ENCODE measurements at regions of chr15 and their contacts with region 1.

Region 1: GRCh38 chr15:58933281-58934113 is at the start of gene SLTM:
- DNase-seq: peak; percentile 86 to 99 (median 92)
- ATAC-seq: peak; percentile 90
- H3K4me3 ChIP-seq: peak within 1 kb of the TSS; percentile 86
- H3K4me3 Mint-ChIP-seq: peak within 1 kb of the TSS; percentile 96
- H3K27ac ChIP-seq: peak within 1 kb of the TSS; percentile 95 to 96
- H3K27ac Mint-ChIP-seq: peak within 1 kb of the TSS; percentile 99
- H3K4me1 ChIP-seq: peaks cover 15% of the 10 kb centered on the region
- H3K4me1 Mint-ChIP-seq: peaks cover 34% of the 10 kb centered on the region
- H3K27me3 ChIP-seq: no peaks in the 10 kb centered on the region
- H3K27me3 Mint-ChIP-seq: no peaks in the 10 kb centered on the region
- CTCF ChIP-seq: no peak
- total RNA-seq, gene SLTM: 183 to 189 TPM

Region 2: DNA sequence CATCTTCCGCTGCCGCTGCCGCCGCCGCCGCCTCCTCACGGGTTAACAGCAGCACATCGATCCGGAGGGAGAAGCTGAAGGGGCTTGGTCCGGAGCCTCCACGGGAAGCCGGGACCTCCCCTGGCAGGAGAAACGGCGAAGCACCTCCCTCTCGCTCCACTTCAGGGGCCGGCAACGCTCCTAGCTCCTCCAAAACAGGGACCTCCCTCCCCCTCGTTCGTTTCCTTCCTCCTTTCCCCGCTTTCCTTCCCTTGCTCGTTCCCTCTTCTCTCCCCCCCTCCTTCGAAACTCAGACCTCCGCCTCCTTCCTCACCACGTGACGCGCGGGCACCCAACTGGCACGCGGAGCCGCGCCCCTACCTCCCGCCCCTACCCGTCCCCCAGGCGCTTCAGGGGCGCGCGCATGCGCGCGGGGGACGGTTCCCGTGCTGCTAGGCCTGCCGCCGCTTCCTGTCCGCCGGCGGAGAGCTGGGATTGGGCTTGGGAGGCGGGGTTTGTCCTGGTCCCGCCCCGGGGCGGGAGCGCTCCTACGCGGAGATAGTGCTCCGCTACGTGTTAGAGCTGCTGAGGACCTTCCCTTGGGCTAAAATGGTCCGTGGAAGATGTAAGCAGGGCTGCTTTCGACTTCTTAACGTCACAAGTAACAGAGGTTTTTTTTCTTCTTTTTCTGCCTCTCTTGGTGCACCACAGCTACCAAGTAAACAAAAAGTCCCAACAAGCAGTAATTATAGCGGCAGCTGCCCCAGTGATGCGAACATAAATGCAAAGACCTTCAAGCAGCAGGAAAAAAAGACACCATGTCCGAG is 183.8 kb before region 1 on chr15 and contains the start of gene ADAM10:
- CTCF ChIA-PET with region 1: no interaction called
- POLR2A ChIA-PET with region 1: interaction called, 5 read pairs
- intact Hi-C with region 1: loop called in 1 of 2 experiments (anchors 2 kb)
- DNase-seq: peak; percentile 92 to 99 (median 98)
- ATAC-seq: peak; percentile 89
- H3K4me3 ChIP-seq: peak within 1 kb of the TSS; percentile 97
- H3K4me3 Mint-ChIP-seq: peak within 1 kb of the TSS; percentile 97
- H3K27ac ChIP-seq: peak within 1 kb of the TSS; percentile 73 to 81
- H3K27ac Mint-ChIP-seq: peak within 1 kb of the TSS; percentile 90
- H3K4me1 ChIP-seq: peaks cover 19% of the 10 kb centered on the region
- H3K4me1 Mint-ChIP-seq: peaks cover 46% of the 10 kb centered on the region
- H3K27me3 ChIP-seq: no peaks in the 10 kb centered on the region
- H3K27me3 Mint-ChIP-seq: no peaks in the 10 kb centered on the region
- CTCF ChIP-seq: no peak
- total RNA-seq, gene ADAM10: 70.5 to 80.4 TPM

Region 3: DNA sequence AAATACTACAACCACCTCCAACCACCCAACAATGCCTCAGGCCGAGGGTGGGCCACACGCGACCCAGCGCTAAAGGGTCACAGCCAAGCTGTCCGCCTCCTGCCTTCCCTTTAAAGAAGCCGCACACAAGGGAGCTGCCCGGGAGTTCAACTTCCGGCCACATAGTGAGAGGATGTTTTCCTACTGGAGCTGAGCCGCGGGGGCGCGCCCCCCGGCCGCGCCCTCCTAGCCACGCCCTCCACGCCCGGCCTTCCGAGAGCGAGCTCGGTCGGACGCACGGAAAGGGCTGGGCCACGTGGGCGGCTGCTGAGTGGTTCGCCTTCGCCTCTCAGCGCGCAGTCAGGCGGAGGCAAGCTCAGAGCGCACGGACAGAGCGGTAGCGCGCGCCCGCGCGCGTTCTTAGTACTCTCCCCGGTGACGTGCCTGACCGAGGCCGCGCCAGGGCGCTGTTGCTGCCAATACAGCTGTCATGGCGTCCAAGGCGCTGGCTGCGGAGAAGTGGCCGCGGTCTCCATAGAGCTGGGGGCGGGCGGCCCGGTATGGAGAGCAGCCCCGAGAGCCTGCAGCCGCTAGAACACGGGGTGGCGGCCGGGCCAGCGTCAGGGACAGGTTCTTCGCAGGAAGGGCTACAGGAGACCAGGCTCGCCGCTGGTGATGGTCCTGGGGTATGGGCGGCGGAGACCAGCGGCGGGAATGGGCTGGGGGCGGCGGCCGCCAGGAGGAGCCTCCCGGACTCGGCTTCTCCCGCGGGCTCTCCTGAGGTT is 162.5 kb before region 1 on chr15 and contains the start of gene MINDY2:
- CTCF ChIA-PET with region 1: no interaction called
- POLR2A ChIA-PET with region 1: interaction called, 8 read pairs
- intact Hi-C with region 1: loop called (anchors 1 to 5 kb)
- DNase-seq: peak; percentile 86 to 97 (median 92)
- ATAC-seq: peak; percentile 93
- H3K4me3 ChIP-seq: peak within 1 kb of the TSS; percentile 86
- H3K4me3 Mint-ChIP-seq: no peak within 1 kb of the TSS
- H3K27ac ChIP-seq: peak within 1 kb of the TSS; percentile 74 to 83
- H3K27ac Mint-ChIP-seq: peak within 1 kb of the TSS; percentile 89
- H3K4me1 ChIP-seq: peaks cover 33% of the 10 kb centered on the region
- H3K4me1 Mint-ChIP-seq: peaks cover 20% of the 10 kb centered on the region
- H3K27me3 ChIP-seq: no peaks in the 10 kb centered on the region
- H3K27me3 Mint-ChIP-seq: no peaks in the 10 kb centered on the region
- CTCF ChIP-seq: no peak
- total RNA-seq, gene MINDY2: 7.5 to 7.7 TPM

Region 4: DNA sequence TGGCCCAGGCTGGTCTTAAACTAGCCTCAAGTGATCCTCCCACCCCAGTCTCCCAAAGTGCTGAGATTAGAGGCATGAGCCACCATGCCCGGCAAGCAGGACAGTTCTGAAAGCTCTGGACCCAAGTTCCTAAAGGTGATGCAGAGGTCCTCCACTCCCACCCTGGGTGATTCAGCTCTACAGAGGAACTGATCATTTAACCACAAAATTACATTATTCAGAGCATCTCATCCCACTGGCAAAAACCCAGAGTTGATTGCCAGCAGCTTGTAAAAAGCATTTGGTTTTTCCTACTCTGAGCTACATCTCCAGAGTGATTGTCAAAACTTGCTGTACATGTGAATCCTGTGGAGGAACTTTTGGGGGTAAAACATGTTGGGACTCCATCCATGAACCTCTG is 60.2 kb before region 1 on chr15:
- CTCF ChIA-PET with region 1: no interaction called
- POLR2A ChIA-PET with region 1: no interaction called
- intact Hi-C with region 1: no loop called
- DNase-seq: no peak
- ATAC-seq: no peak
- H3K4me3 ChIP-seq: no peak overlapping the region
- H3K4me3 Mint-ChIP-seq: no peak overlapping the region
- H3K27ac ChIP-seq: no peak overlapping the region
- H3K27ac Mint-ChIP-seq: no peak overlapping the region
- H3K4me1 ChIP-seq: no peaks in the 10 kb centered on the region
- H3K4me1 Mint-ChIP-seq: no peaks in the 10 kb centered on the region
- H3K27me3 ChIP-seq: no peaks in the 10 kb centered on the region
- H3K27me3 Mint-ChIP-seq: no peaks in the 10 kb centered on the region
- CTCF ChIP-seq: no peak

Region 5: DNA sequence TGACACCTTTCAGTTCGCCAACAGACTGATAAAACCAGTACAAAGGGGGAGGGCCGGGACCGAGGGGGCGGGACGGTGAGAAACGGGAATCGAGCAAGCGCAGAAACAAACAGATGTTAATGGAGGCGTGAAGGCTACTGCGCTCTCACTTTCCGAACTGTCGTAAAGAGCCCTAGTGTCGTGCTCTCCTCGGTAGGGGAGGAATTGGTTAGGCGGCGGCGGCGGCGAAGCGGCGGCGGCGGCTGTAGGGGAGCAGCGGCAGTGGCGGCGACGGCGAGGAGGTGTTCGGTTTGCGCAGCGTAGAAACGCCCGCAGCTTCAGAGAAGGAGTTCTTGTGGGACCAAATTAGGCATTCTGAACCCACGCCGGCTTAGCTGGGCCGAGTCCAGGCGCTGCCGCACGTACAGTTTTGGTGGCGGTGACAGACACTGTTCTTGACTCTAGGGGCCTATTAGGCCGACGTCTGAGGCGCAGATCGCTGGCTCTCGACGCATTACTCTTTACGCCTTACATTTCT is 54.0 kb after region 1 on chr15 and contains the start of gene RNF111:
- CTCF ChIA-PET with region 1: no interaction called
- POLR2A ChIA-PET with region 1: interaction called, 3 read pairs
- intact Hi-C with region 1: loop called (anchors 2 to 10 kb)
- DNase-seq: peak; percentile 79 to 97 (median 86)
- ATAC-seq: peak; percentile 95
- H3K4me3 ChIP-seq: peak within 1 kb of the TSS; percentile 99
- H3K4me3 Mint-ChIP-seq: peak within 1 kb of the TSS; percentile 98
- H3K27ac ChIP-seq: peak within 1 kb of the TSS; percentile 84 to 87
- H3K27ac Mint-ChIP-seq: peak within 1 kb of the TSS; percentile 92
- H3K4me1 ChIP-seq: peaks cover 14% of the 10 kb centered on the region
- H3K4me1 Mint-ChIP-seq: peaks cover 51% of the 10 kb centered on the region
- H3K27me3 ChIP-seq: no peaks in the 10 kb centered on the region
- H3K27me3 Mint-ChIP-seq: no peaks in the 10 kb centered on the region
- CTCF ChIP-seq: no peak
- total RNA-seq, gene RNF111: 35.4 to 37.1 TPM

Region 6: DNA sequence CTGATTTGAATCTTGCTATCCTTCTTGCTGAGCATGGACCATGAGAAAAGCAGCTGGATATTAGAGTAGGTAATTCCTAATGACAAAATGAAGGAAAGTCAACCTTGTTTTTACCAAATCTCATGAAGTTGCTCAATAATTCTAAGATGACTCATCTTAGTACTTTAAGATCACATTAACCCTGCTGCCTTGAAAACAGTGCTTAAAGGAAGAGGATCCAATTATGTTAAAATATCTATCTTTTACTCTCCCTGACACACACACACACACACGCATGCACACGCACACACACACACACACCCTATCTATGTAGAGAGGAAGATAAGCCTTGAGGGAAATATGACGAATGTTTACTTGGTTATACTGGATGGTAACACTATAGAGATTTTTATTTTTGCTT is 455.2 kb after region 1 on chr15:
- CTCF ChIA-PET with region 1: no interaction called
- POLR2A ChIA-PET with region 1: no interaction called
- intact Hi-C with region 1: no loop called
- DNase-seq: no peak
- ATAC-seq: no peak
- H3K4me3 ChIP-seq: no peak overlapping the region
- H3K4me3 Mint-ChIP-seq: no peak overlapping the region
- H3K27ac ChIP-seq: no peak overlapping the region
- H3K27ac Mint-ChIP-seq: no peak overlapping the region
- H3K4me1 ChIP-seq: no peaks in the 10 kb centered on the region
- H3K4me1 Mint-ChIP-seq: no peaks in the 10 kb centered on the region
- H3K27me3 ChIP-seq: no peaks in the 10 kb centered on the region
- H3K27me3 Mint-ChIP-seq: peaks cover 4% of the 10 kb centered on the region
- CTCF ChIP-seq: no peak

Region 7: GRCh38 chr15:59656897-59657634 is 723.6 kb after region 1 on chr15 and contains the start of gene GTF2A2:
- CTCF ChIA-PET with region 1: no interaction called
- POLR2A ChIA-PET with region 1: no interaction called
- intact Hi-C with region 1: loop called in 1 of 2 experiments (anchors 10 kb)
- DNase-seq: peak; percentile 82 to 96 (median 89)
- ATAC-seq: peak; percentile 98
- H3K4me3 ChIP-seq: peak within 1 kb of the TSS; percentile 94
- H3K4me3 Mint-ChIP-seq: peak within 1 kb of the TSS; percentile 57
- H3K27ac ChIP-seq: peak within 1 kb of the TSS; percentile 77 to 86
- H3K27ac Mint-ChIP-seq: no peak within 1 kb of the TSS
- H3K4me1 ChIP-seq: peaks cover 17% of the 10 kb centered on the region
- H3K4me1 Mint-ChIP-seq: no peaks in the 10 kb centered on the region
- H3K27me3 ChIP-seq: no peaks in the 10 kb centered on the region
- H3K27me3 Mint-ChIP-seq: no peaks in the 10 kb centered on the region
- CTCF ChIP-seq: no peak
- total RNA-seq, gene GTF2A2: 40.3 to 44.6 TPM

Region 8: DNA sequence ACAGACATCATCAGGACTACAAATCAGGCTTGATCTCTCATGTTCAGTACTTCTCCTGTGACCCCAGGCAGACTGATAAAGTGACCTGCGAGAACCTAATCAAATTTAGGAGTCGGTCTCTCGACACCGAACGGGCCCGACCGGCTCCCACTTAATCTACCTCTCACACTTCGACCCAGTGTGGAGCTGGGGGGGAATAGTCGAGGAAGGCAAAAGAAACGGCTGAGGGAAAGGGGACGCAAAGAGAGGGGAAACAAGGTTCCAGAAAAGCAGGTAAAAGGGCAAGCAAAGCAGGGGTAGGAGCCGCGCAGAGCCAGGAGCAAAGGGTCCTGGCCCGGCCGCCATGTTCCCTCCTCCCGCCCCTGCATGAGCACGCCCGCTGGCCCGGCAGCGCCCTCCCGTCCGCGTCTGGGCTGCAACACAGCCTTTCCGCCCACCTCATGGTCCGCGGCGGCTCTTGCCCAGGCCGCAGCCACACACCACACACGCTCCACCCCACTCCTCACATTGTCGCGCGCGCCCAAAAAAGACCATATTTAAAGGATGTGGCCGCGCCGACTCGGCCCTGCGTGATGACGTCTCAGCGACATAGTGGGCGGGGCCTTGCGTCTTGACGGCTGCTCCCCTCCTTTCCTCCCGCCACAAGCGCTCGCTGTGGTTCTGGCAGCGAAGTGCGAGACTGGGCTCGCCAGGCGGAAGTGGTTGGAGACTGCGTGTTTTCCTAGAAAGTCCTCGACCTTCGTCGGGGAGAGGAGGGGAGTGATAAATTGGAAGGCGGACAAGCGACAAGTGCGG is 1545.3 kb after region 1 on chr15 and contains the start of gene ICE2:
- CTCF ChIA-PET with region 1: no interaction called
- POLR2A ChIA-PET with region 1: no interaction called
- intact Hi-C with region 1: loop called in 1 of 2 experiments (anchors 10 kb)
- DNase-seq: peak; percentile 89 to 98 (median 94)
- ATAC-seq: peak; percentile 90
- H3K4me3 ChIP-seq: peak within 1 kb of the TSS; percentile 92
- H3K4me3 Mint-ChIP-seq: peak within 1 kb of the TSS; percentile 98
- H3K27ac ChIP-seq: peak within 1 kb of the TSS; percentile 86 to 92
- H3K27ac Mint-ChIP-seq: peak within 1 kb of the TSS; percentile 99
- H3K4me1 ChIP-seq: peaks cover 26% of the 10 kb centered on the region
- H3K4me1 Mint-ChIP-seq: peaks cover 68% of the 10 kb centered on the region
- H3K27me3 ChIP-seq: no peaks in the 10 kb centered on the region
- H3K27me3 Mint-ChIP-seq: no peaks in the 10 kb centered on the region
- CTCF ChIP-seq: no peak
- total RNA-seq, gene ICE2: 20.4 to 23.4 TPM

Measured in CD4-positive, alpha-beta T cell (primary cell).